ENCODE measurements at regions of chr15 and their contacts with region 1.

Region 1: GRCh38 chr15:73081321-73081958 is 29.2 kb downstream of the NEO1 start:
- DNase-seq: peak in 1 of 3 donors; percentile 24
- ATAC-seq: peak; percentile 29 to 54
- H3K4me3 ChIP-seq: no peak overlapping the region
- H3K27ac ChIP-seq: no peak overlapping the region
- H3K4me1 ChIP-seq: peaks cover 1% of the 10 kb centered on the region
- H3K27me3 ChIP-seq: peaks cover 2% of the 10 kb centered on the region

Region 2: GRCh38 chr15:72790302-72790910 is 291.0 kb before region 1 on chr15:
- intact Hi-C with region 1: loop called in 3 of 4 experiments (anchors 5 to 10 kb)
- DNase-seq: no peak
- ATAC-seq: no peak
- H3K4me3 ChIP-seq: no peak overlapping the region
- H3K27ac ChIP-seq: no peak overlapping the region
- H3K4me1 ChIP-seq: no peaks in the 10 kb centered on the region
- H3K27me3 ChIP-seq: no peaks in the 10 kb centered on the region

Region 3: GRCh38 chr15:72796515-72797337 is 284.7 kb before region 1 on chr15:
- intact Hi-C with region 1: loop called (anchors 2 to 10 kb)
- DNase-seq: peak; percentile 74 to 80 (median 75)
- ATAC-seq: peak; percentile 88 to 92
- H3K4me3 ChIP-seq: peak overlapping the region; percentile 50
- H3K27ac ChIP-seq: no peak overlapping the region
- H3K4me1 ChIP-seq: no peaks in the 10 kb centered on the region
- H3K27me3 ChIP-seq: no peaks in the 10 kb centered on the region

Region 4: GRCh38 chr15:73127301-73127936 is 46.0 kb after region 1 on chr15:
- intact Hi-C with region 1: no loop called
- DNase-seq: no peak
- ATAC-seq: no peak
- H3K4me3 ChIP-seq: no peak overlapping the region
- H3K27ac ChIP-seq: no peak overlapping the region
- H3K4me1 ChIP-seq: no peaks in the 10 kb centered on the region
- H3K27me3 ChIP-seq: no peaks in the 10 kb centered on the region

Region 5: DNA sequence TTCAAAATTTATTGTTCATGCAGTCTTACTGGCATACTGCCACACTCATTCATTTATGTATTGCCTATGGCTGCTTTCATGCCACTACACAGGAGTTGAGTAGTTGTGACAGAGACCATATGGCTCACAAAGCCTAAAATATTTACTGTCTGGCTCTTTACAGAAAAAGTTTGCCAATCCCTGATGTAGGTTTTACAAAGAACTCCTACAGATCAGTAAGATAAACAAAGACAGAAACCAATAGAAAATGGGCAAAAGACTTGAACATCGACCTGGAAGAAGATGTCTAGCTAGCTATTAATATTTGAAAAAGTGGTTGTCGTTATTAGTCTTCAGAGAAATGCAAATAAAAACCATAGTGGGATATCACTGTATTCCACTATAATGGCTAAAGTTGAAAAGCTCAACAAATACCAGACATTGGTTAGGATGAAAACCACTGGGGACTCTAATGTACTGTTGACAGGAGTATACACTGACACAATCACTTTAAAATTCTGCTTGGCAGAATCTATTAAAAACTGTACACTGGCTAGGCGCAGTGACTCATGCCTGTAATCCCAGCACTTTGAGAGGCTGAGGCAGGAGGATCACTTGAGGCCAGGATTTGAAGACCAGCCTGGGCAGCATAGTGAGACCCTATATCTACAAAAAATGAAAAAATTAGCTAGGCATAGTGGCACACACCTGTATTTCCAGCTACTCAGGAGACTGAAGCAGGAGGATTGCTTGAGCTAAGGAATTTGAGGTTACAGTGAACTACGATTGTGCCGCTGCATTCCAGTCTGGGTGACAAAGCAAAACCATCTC is 58.5 kb after region 1 on chr15:
- intact Hi-C with region 1: no loop called
- DNase-seq: no peak
- ATAC-seq: no peak
- H3K4me3 ChIP-seq: no peak overlapping the region
- H3K27ac ChIP-seq: no peak overlapping the region
- H3K4me1 ChIP-seq: no peaks in the 10 kb centered on the region
- H3K27me3 ChIP-seq: no peaks in the 10 kb centered on the region

Measured in right cardiac atrium (tissue), 5 donors.